Head of caudate nucleus (tissue), 42 donors: ENCODE measurements at regions of chr11 and their contacts with region 1.

Region 1: GRCh38 chr11:1832211-1832919 is 2.4 kb upstream of the SYT8 start:
- DNase-seq: peak in 41 of 42 donors; percentile 32 to 89 (median 71)

Region 2: GRCh38 chr11:1652771-1653540 is 179.4 kb before region 1 on chr11:
- intact Hi-C with region 1: loop called (anchors 5 kb)
- DNase-seq: peak; percentile 71 to 94 (median 87)

Region 3: DNA sequence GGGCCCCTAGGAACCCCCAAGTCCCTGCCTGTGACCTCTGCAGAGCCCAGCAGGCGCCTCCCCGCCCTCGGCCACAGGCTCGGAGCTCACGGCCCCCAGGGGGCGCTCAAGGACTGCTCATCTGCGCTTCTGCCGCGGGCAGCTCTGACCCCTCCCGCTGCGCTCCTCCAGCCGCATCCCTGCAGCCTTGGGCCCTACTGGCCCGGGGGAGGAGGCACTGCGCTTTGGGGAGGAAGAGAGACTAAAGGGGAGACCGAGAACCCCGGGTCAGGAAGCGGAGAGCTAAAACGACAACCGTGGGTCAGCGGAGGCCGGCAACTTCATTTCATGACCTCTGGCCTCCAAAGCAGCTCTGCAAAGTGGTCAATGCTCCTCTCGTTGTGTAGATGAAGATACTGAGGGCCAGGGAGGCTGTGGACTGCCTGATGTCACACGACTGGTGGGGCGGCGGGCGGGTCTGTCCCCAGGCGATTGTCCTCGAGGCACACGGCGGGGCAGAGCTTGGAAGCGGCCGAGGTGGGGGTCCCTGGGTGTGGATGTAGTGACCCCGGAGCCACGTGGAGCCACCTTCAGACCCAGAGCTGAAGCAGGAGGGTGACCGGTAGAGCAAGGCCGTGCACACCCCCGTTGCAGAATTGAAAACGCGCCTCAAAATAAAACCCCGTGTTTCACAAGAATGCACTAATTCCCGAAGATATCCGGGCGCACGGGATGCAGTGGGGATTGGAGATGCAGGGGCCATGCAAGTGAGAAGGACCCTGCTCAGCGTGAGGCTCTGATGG is 138.1 kb before region 1 on chr11:
- intact Hi-C with region 1: loop called (anchors 2 kb)
- DNase-seq: peak; percentile 73 to 97 (median 92)

Region 4: GRCh38 chr11:1763796-1764661 is 68.3 kb before region 1 on chr11 and contains the start of gene CTSD:
- intact Hi-C with region 1: no loop called
- DNase-seq: peak; percentile 79 to 97 (median 93)

Region 5: GRCh38 chr11:1889224-1890120 is 57.1 kb after region 1 on chr11:
- intact Hi-C with region 1: no loop called
- DNase-seq: peak in 1 of 42 donors; percentile 11